Natural killer cell (primary cell): ENCODE measurements at regions of chr17 and their contacts with region 1.

Region 1: DNA sequence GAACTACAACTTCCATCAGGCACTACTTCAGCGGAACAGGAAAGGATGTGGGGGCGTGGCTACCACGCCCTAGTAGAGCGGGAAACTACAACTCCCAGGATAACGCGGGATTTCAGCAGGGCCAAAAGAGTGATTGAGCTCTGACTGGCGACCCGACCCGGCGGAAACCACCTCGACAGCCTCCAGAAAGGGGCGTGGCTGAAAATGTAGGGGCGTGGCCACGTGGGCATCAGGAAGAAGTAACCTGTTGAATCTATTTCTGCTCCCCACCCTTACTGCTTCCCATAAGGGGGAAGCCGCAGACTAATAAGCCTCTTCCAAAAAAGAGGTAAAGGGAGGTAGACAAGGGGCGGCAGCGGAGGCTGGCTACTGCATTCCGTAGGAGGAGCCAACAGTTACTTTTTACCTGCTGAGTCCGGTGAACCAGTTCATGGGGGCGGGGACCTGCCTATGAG is at the start of gene TMEM102:
- DNase-seq: peak; percentile 97 to 99
- ATAC-seq: peak; percentile 88 to 95 (median 89)
- H3K4me3 ChIP-seq: peak within 1 kb of the TSS; percentile 50
- H3K4me3 Mint-ChIP-seq: peak within 1 kb of the TSS; percentile 91
- H3K27ac ChIP-seq: peak within 1 kb of the TSS; percentile 73
- H3K27ac Mint-ChIP-seq: peak within 1 kb of the TSS; percentile 93 to 95
- H3K4me1 ChIP-seq: peaks cover 50% of the 10 kb centered on the region
- H3K4me1 Mint-ChIP-seq: peaks cover 25 to 44% of the 10 kb centered on the region in 2 donors
- H3K27me3 ChIP-seq: peaks cover 19% of the 10 kb centered on the region
- H3K27me3 Mint-ChIP-seq: peaks cover 10 to 17% of the 10 kb centered on the region in 2 donors
- CTCF ChIP-seq: no peak
- total RNA-seq, gene TMEM102: 5.1 to 8.6 (median 7.0) TPM

Region 2: DNA sequence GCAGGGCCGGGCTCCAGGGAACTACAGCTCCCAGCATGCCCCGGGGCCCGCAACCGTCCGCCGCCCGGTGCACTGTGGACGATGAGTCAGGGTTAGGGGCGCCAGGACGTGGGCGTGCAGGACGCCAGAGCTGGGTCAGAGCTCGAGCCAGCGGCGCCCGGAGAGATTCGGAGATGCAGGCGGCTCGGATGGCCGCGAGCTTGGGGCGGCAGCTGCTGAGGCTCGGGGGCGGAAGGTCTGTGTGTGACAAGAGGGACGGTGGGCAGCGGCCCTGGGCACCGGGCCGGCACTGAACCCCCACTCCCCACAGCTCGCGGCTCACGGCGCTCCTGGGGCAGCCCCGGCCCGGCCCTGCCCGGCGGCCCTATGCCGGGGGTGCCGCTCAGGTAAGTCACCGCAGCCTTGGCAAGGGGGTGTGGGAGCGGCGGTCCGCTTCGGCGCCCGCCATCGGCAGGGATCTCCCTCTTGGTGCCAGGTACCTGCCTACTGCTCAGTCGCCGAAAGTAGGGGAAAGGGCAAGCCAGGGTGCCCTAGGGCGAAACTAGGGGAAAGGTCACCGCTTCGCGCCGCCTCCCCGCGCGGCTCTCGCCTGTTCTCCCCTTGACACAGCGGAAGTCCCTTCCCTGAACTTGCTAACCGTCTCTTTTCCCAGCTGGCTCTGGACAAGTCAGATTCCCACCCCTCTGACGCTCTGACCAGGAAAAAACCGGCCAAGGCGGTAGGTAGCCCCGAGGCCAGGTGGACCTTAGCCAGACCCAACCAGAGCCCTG is 215.3 kb before region 1 on chr17 and contains the starts of genes ACADVL and DLG4:
- intact Hi-C with region 1: no loop called
- DNase-seq: peak; percentile 77 to 84
- ATAC-seq: peak; percentile 83 to 88 (median 83)
- H3K4me3 ChIP-seq: peak within 1 kb of the TSS; percentile 77
- H3K4me3 Mint-ChIP-seq: peak within 1 kb of the TSS; percentile 98
- H3K27ac ChIP-seq: peak within 1 kb of the TSS; percentile 65
- H3K27ac Mint-ChIP-seq: peak within 1 kb of the TSS; percentile 94 to 98
- H3K4me1 ChIP-seq: peaks cover 39% of the 10 kb centered on the region
- H3K4me1 Mint-ChIP-seq: peaks cover 19 to 49% of the 10 kb centered on the region in 2 donors
- H3K27me3 ChIP-seq: no peaks in the 10 kb centered on the region
- H3K27me3 Mint-ChIP-seq: peaks cover 0 to 4% of the 10 kb centered on the region in 2 donors
- CTCF ChIP-seq: no peak
- total RNA-seq, gene ACADVL: 439 to 637 (median 607) TPM
- total RNA-seq, gene DLG4: 6.7 to 11.2 (median 8.6) TPM

Region 3: DNA sequence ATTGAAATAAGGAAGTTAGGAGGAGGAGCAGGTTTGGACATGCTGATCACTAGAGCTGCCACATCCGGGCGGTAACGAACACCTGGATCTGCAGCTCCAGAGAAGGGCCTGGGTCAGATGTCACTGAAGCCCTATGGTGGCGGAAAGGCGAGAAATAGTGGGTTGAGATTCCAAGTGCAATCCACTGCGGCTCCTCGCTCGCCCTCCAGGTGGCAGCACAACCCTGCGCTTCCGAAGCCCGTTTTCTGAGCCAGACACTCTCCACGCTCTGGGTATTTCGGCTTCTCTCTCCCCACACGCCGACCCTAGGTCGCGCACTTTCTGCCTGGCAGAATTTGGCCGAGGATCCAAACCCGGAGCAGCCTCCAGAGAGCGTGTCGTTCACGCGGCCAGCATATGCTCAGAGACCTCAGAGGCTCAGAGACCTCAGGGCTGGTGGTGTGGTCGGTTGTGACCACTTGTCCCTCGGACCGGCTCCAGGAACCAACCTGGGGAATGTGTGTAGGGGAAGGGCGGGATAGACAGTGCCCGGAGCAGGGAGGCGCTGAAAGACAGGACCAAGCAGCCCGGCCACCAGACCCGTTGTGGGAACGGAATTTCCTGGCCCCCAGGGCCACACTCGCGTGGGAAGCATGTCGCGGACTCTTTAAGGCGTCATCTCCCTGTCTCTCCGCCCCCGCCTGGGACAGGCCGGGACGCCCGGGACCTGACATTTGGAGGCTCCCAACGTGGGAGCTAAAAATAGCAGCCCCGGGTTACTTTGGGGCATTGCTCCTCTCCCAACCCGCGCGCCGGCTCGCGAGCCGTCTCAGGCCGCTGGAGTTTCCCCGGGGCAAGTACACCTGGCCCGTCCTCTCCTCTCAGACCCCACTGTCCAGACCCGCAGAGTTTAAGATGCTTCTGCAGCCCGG is 154.5 kb before region 1 on chr17:
- intact Hi-C with region 1: loop called (anchors 1 kb)
- DNase-seq: peak; percentile 84 to 88
- ATAC-seq: peak; percentile 89 to 95 (median 91)
- H3K4me3 ChIP-seq: peak overlapping the region; percentile 23
- H3K4me3 Mint-ChIP-seq: peak overlapping the region; percentile 90
- H3K27ac ChIP-seq: no peak overlapping the region
- H3K27ac Mint-ChIP-seq: peak overlapping the region in 1 of 2 donors; percentile 16
- H3K4me1 ChIP-seq: peaks cover 31% of the 10 kb centered on the region
- H3K4me1 Mint-ChIP-seq: peaks cover 22 to 31% of the 10 kb centered on the region in 2 donors
- H3K27me3 ChIP-seq: peaks cover 29% of the 10 kb centered on the region
- H3K27me3 Mint-ChIP-seq: peaks cover 18 to 24% of the 10 kb centered on the region in 2 donors
- CTCF ChIP-seq: peak; percentile 94

Region 4: GRCh38 chr17:7351665-7352501 is 83.4 kb before region 1 on chr17 and contains the start of gene KCTD11:
- intact Hi-C with region 1: loop called (anchors 5 kb)
- DNase-seq: peak; percentile 79 to 83
- ATAC-seq: peak; percentile 75 to 88 (median 78)
- H3K4me3 ChIP-seq: peak within 1 kb of the TSS; percentile 84
- H3K4me3 Mint-ChIP-seq: peak within 1 kb of the TSS; percentile 97
- H3K27ac ChIP-seq: peak within 1 kb of the TSS; percentile 95
- H3K27ac Mint-ChIP-seq: peak within 1 kb of the TSS; percentile 89
- H3K4me1 ChIP-seq: peaks cover 45% of the 10 kb centered on the region
- H3K4me1 Mint-ChIP-seq: peaks cover 9 to 59% of the 10 kb centered on the region in 2 donors
- H3K27me3 ChIP-seq: no peaks in the 10 kb centered on the region
- H3K27me3 Mint-ChIP-seq: no peaks in the 10 kb centered on the region
- CTCF ChIP-seq: peak; percentile 1
- total RNA-seq, gene KCTD11: 5.6 to 9.7 (median 8.3) TPM

Region 5: DNA sequence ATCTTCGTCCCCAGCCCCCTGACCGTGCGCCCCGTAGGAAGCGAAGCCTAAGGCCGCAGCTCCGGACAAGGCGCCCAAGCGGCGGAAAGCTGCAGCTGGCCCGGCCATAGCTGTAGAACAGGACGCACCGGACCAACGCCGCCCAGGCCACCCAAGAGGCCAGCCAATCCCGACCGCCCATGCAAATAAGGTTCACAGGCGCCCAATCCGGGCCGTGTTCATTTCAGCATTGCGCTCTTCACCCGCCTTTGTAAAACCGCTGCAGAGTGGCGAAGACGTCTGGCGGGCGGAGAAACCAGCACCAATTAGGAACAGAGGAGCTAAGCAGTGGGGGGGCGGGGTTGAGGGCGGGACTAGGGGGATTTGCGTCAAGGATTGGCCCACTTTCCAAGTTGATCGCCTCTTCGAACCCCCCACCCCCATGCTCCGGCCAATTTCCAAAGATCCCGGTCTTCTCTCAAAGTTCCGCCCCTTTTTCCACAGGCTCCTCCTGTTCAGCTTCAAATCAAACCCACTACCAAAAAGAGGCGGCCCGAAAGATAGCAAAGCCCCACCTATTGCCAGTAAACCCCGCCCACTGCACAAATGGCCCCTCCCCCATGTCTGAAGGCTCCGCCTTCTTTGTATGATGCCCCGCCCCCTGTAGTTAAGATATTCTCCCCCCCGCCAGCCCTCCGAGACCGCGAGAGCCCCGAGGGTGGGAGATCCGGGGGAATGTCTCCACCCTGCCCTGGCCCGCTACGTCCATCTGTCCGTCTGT is 31.1 kb before region 1 on chr17 and contains the start of gene TMEM256:
- intact Hi-C with region 1: loop called (anchors 1 kb)
- DNase-seq: peak; percentile 94 to 98
- ATAC-seq: peak; percentile 85 to 93 (median 86)
- H3K4me3 ChIP-seq: peak within 1 kb of the TSS; percentile 69
- H3K4me3 Mint-ChIP-seq: peak within 1 kb of the TSS; percentile 92
- H3K27ac ChIP-seq: peak within 1 kb of the TSS; percentile 93
- H3K27ac Mint-ChIP-seq: peak within 1 kb of the TSS; percentile 90 to 96
- H3K4me1 ChIP-seq: peaks cover 28% of the 10 kb centered on the region
- H3K4me1 Mint-ChIP-seq: peaks cover 8 to 30% of the 10 kb centered on the region in 2 donors
- H3K27me3 ChIP-seq: peaks cover 3% of the 10 kb centered on the region
- H3K27me3 Mint-ChIP-seq: peaks cover 3 to 12% of the 10 kb centered on the region in 2 donors
- CTCF ChIP-seq: no peak
- total RNA-seq, gene TMEM256: 31.8 to 35.9 (median 34.2) TPM

Region 6: GRCh38 chr17:7454980-7455379 is 19.7 kb after region 1 on chr17:
- intact Hi-C with region 1: loop called (anchors 1 kb)
- DNase-seq: no peak
- ATAC-seq: no peak
- H3K4me3 ChIP-seq: peak overlapping the region; percentile 68
- H3K4me3 Mint-ChIP-seq: peak overlapping the region; percentile 96
- H3K27ac ChIP-seq: peak overlapping the region; percentile 69
- H3K27ac Mint-ChIP-seq: peak overlapping the region; percentile 90 to 92
- H3K4me1 ChIP-seq: peaks cover 16% of the 10 kb centered on the region
- H3K4me1 Mint-ChIP-seq: peaks cover 6 to 18% of the 10 kb centered on the region in 2 donors
- H3K27me3 ChIP-seq: no peaks in the 10 kb centered on the region
- H3K27me3 Mint-ChIP-seq: no peaks in the 10 kb centered on the region
- CTCF ChIP-seq: no peak

Region 7: GRCh38 chr17:7484067-7484918 is 49.0 kb after region 1 on chr17 and contains the start of gene POLR2A:
- intact Hi-C with region 1: loop called (anchors 2 kb)
- DNase-seq: peak; percentile 99
- ATAC-seq: peak; percentile 63 to 83 (median 66)
- H3K4me3 ChIP-seq: peak within 1 kb of the TSS; percentile 81
- H3K4me3 Mint-ChIP-seq: peak within 1 kb of the TSS; percentile 100
- H3K27ac ChIP-seq: peak within 1 kb of the TSS; percentile 96
- H3K27ac Mint-ChIP-seq: peak within 1 kb of the TSS; percentile 100
- H3K4me1 ChIP-seq: peaks cover 50% of the 10 kb centered on the region
- H3K4me1 Mint-ChIP-seq: peaks cover 72 to 84% of the 10 kb centered on the region in 2 donors
- H3K27me3 ChIP-seq: no peaks in the 10 kb centered on the region
- H3K27me3 Mint-ChIP-seq: no peaks in the 10 kb centered on the region
- CTCF ChIP-seq: no peak
- total RNA-seq, gene POLR2A: 515 to 879 (median 524) TPM

Region 8: GRCh38 chr17:7502987-7503386 is 67.7 kb after region 1 on chr17:
- intact Hi-C with region 1: loop called (anchors 5 kb)
- DNase-seq: peak in 1 of 2 donors; percentile 43
- ATAC-seq: peak in 2 of 3 donors; percentile 25 to 39
- H3K4me3 ChIP-seq: no peak overlapping the region
- H3K4me3 Mint-ChIP-seq: no peak overlapping the region
- H3K27ac ChIP-seq: no peak overlapping the region
- H3K27ac Mint-ChIP-seq: no peak overlapping the region
- H3K4me1 ChIP-seq: no peaks in the 10 kb centered on the region
- H3K4me1 Mint-ChIP-seq: no peaks in the 10 kb centered on the region
- H3K27me3 ChIP-seq: no peaks in the 10 kb centered on the region
- H3K27me3 Mint-ChIP-seq: no peaks in the 10 kb centered on the region
- CTCF ChIP-seq: no peak